Activated CD4-positive, alpha-beta memory T cell treated with anti-CD3 and anti-CD28 coated beads, Interleukin-2, amount 10 ng/mL, durations not matched to agents 7 days and 5 days (primary cell): ENCODE measurements at regions of chr11 and their contacts with region 1.

Region 1: DNA sequence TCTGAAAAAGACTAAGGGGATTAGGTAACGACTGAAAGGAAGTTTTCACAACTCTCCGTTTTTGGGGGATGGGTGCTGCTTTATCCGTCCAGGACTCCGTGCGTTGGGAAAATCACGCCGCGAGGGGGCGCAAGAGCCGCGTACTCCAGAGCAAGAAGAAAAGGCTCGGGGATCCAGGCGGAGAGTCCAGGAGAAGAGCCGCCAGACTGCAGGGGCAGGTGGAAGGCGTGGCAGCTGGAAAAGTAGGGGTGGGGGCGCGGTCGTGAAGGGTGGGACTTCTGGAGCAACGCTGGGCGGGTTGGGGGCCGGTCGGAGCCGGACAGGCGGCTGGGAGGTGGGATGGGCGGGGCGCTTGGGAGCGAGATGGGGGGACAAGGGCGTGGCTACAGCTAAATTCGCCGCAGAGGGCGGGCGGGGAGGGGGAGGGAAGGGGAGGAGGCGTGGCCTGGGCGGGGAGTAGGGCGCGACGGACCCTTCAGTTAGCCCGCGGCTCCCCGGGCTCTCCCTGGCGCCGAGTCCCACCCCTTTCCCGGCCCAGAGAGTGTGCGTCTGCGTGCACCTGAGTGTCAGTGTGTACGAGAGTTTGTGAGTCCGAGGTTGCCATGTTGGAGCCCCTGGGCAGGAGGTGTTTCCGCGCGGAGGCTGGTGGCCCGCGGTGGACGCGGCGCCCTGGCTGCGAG is 613 bp upstream of the ARHGEF17 start:
- DNase-seq: peak; percentile 89
- H3K4me3 Mint-ChIP-seq: peak overlapping the region; percentile 83
- H3K27ac Mint-ChIP-seq: no peak overlapping the region
- H3K4me1 Mint-ChIP-seq: peaks cover 8% of the 10 kb centered on the region
- H3K27me3 Mint-ChIP-seq: peaks cover 44% of the 10 kb centered on the region

Region 2: GRCh38 chr11:73335204-73335923 is 27.9 kb after region 1 on chr11:
- CTCF ChIA-PET with region 1: interaction called, 79 read pairs
- POLR2A ChIA-PET with region 1: interaction called, 3 read pairs
- DNase-seq: peak; percentile 75
- H3K4me3 Mint-ChIP-seq: no peak overlapping the region
- H3K27ac Mint-ChIP-seq: no peak overlapping the region
- H3K4me1 Mint-ChIP-seq: no peaks in the 10 kb centered on the region
- H3K27me3 Mint-ChIP-seq: peaks cover 7% of the 10 kb centered on the region